CD8-positive, alpha-beta T cell (primary cell): ENCODE measurements at regions of chr1 and their contacts with region 1.

Region 1: GRCh38 chr1:116372587-116373444 is at the start of gene ATP1A1:
- DNase-seq: peak; percentile 93 to 99 (median 98)
- ATAC-seq: peak; percentile 66
- H3K4me3 ChIP-seq: peak within 1 kb of the TSS; percentile 73 to 80
- H3K4me3 Mint-ChIP-seq: peak within 1 kb of the TSS; percentile 96
- H3K27ac ChIP-seq: peak within 1 kb of the TSS; percentile 83 to 92
- H3K27ac Mint-ChIP-seq: peak within 1 kb of the TSS; percentile 97
- H3K4me1 ChIP-seq: peaks cover 35% of the 10 kb centered on the region
- H3K4me1 Mint-ChIP-seq: peaks cover 47% of the 10 kb centered on the region
- H3K27me3 ChIP-seq: no peaks in the 10 kb centered on the region
- H3K27me3 Mint-ChIP-seq: no peaks in the 10 kb centered on the region
- CTCF ChIP-seq: no peak
- total RNA-seq, gene ATP1A1: 204 to 211 TPM

Region 2: GRCh38 chr1:116168277-116169097 is 204.3 kb before region 1 on chr1:
- CTCF ChIA-PET with region 1: interaction called, 3 read pairs
- POLR2A ChIA-PET with region 1: no interaction called
- intact Hi-C with region 1: loop called (anchors 5 kb)
- DNase-seq: peak; percentile 74 to 91 (median 86)
- ATAC-seq: peak; percentile 98
- H3K4me3 ChIP-seq: peak overlapping the region; percentile 61 to 88
- H3K4me3 Mint-ChIP-seq: peak overlapping the region; percentile 77
- H3K27ac ChIP-seq: peak overlapping the region; percentile 48 to 68
- H3K27ac Mint-ChIP-seq: peak overlapping the region; percentile 86
- H3K4me1 ChIP-seq: peaks cover 13% of the 10 kb centered on the region
- H3K4me1 Mint-ChIP-seq: peaks cover 12% of the 10 kb centered on the region
- H3K27me3 ChIP-seq: no peaks in the 10 kb centered on the region
- H3K27me3 Mint-ChIP-seq: no peaks in the 10 kb centered on the region
- CTCF ChIP-seq: peak; percentile 94

Region 3: GRCh38 chr1:116202934-116203723 is 169.7 kb before region 1 on chr1:
- CTCF ChIA-PET with region 1: no interaction called
- POLR2A ChIA-PET with region 1: no interaction called
- intact Hi-C with region 1: no loop called
- DNase-seq: no peak
- ATAC-seq: no peak
- H3K4me3 ChIP-seq: no peak overlapping the region
- H3K4me3 Mint-ChIP-seq: no peak overlapping the region
- H3K27ac ChIP-seq: no peak overlapping the region
- H3K27ac Mint-ChIP-seq: no peak overlapping the region
- H3K4me1 ChIP-seq: no peaks in the 10 kb centered on the region
- H3K4me1 Mint-ChIP-seq: no peaks in the 10 kb centered on the region
- H3K27me3 ChIP-seq: no peaks in the 10 kb centered on the region
- H3K27me3 Mint-ChIP-seq: peaks cover 11% of the 10 kb centered on the region
- CTCF ChIP-seq: no peak

Region 4: GRCh38 chr1:116351914-116352313 is 20.9 kb before region 1 on chr1:
- CTCF ChIA-PET with region 1: no interaction called
- POLR2A ChIA-PET with region 1: no interaction called
- intact Hi-C with region 1: no loop called
- DNase-seq: no peak
- ATAC-seq: no peak
- H3K4me3 ChIP-seq: no peak overlapping the region
- H3K4me3 Mint-ChIP-seq: no peak overlapping the region
- H3K27ac ChIP-seq: no peak overlapping the region
- H3K27ac Mint-ChIP-seq: no peak overlapping the region
- H3K4me1 ChIP-seq: peaks cover 23% of the 10 kb centered on the region
- H3K4me1 Mint-ChIP-seq: peaks cover 41% of the 10 kb centered on the region
- H3K27me3 ChIP-seq: peaks cover 0 to 3% of the 10 kb centered on the region in 2 experiments
- H3K27me3 Mint-ChIP-seq: no peaks in the 10 kb centered on the region
- CTCF ChIP-seq: no peak

Region 5: DNA sequence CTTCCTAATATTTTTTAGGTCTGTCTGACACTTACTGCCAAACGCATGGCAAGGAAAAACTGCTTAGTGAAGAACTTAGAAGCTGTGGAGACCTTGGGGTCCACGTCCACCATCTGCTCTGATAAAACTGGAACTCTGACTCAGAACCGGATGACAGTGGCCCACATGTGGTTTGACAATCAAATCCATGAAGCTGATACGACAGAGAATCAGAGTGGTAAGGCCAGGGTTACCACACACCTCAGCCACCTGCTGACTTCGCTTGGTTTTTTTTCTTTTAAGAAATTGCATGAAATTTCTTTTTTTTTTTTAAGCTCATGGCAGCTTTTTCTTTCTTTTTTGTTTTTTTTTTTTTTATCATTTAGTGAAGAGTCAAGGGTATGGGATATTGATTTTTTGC is 17.4 kb after region 1 on chr1:
- CTCF ChIA-PET with region 1: interaction called, 4 read pairs
- POLR2A ChIA-PET with region 1: interaction called, 11 read pairs
- intact Hi-C with region 1: loop called in 1 of 2 experiments (anchors 1 kb)
- DNase-seq: peak in 6 of 9 experiments; percentile 14 to 83 (median 49)
- ATAC-seq: peak; percentile 87
- H3K4me3 ChIP-seq: no peak overlapping the region
- H3K4me3 Mint-ChIP-seq: no peak overlapping the region
- H3K27ac ChIP-seq: peak overlapping the region in 1 of 2 experiments; percentile 34
- H3K27ac Mint-ChIP-seq: peak overlapping the region; percentile 72
- H3K4me1 ChIP-seq: peaks cover 13% of the 10 kb centered on the region
- H3K4me1 Mint-ChIP-seq: peaks cover 61% of the 10 kb centered on the region
- H3K27me3 ChIP-seq: no peaks in the 10 kb centered on the region
- H3K27me3 Mint-ChIP-seq: no peaks in the 10 kb centered on the region
- CTCF ChIP-seq: no peak

Region 6: GRCh38 chr1:116529199-116529616 is 156.4 kb after region 1 on chr1:
- CTCF ChIA-PET with region 1: no interaction called
- POLR2A ChIA-PET with region 1: no interaction called
- intact Hi-C with region 1: no loop called
- DNase-seq: no peak
- ATAC-seq: no peak
- H3K4me3 ChIP-seq: no peak overlapping the region
- H3K4me3 Mint-ChIP-seq: no peak overlapping the region
- H3K27ac ChIP-seq: no peak overlapping the region
- H3K27ac Mint-ChIP-seq: no peak overlapping the region
- H3K4me1 ChIP-seq: no peaks in the 10 kb centered on the region
- H3K4me1 Mint-ChIP-seq: no peaks in the 10 kb centered on the region
- H3K27me3 ChIP-seq: no peaks in the 10 kb centered on the region
- H3K27me3 Mint-ChIP-seq: no peaks in the 10 kb centered on the region
- CTCF ChIP-seq: no peak

Region 7: DNA sequence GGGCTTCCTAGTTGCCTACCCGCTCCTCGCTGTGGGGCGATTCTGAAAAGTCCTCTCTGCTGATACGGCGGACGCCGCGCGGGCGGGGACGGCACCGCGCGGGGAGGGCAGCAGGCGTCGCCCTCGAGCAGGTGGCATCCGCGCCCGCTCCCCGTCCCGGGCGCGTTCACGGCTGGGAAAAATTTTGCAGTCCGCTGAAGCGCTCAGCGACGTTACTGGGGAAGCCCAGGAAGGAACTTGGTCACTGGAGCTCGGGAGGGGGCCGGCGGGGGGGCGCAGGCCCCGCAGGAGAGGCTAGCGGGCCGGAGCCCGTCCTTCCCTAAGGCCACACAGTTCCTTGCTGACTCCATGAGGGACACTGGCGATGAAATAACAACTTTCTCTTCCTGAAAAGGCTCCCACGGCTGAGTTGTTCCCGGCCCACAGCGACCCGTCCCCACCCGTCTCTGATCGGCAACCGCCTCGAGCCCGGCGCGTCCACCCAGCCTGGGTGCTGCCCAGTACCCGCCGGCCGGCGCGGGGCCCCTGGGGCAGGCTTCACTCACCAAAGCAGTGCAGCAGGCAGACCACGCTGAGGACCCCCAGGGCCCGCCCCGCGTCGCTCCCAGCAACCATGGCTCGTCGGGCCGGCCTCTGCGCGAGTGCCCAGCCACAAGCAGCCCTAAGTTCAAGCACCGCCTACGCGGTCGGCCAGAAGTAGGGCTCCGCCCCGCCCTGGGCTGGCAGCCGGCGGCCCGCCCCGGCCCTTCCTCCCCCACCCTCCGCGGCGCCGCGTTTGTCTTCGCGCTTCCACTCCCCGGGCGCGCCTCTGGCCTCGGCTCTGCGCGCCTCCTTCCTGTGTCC is 197.8 kb after region 1 on chr1 and contains the start of gene CD58:
- CTCF ChIA-PET with region 1: no interaction called
- POLR2A ChIA-PET with region 1: no interaction called
- intact Hi-C with region 1: loop called (anchors 2 to 5 kb)
- DNase-seq: peak; percentile 53 to 89 (median 76)
- ATAC-seq: peak; percentile 75
- H3K4me3 ChIP-seq: peak within 1 kb of the TSS; percentile 88 to 95
- H3K4me3 Mint-ChIP-seq: peak within 1 kb of the TSS; percentile 92
- H3K27ac ChIP-seq: peak within 1 kb of the TSS; percentile 62 to 89
- H3K27ac Mint-ChIP-seq: peak within 1 kb of the TSS; percentile 92
- H3K4me1 ChIP-seq: peaks cover 3% of the 10 kb centered on the region
- H3K4me1 Mint-ChIP-seq: peaks cover 38% of the 10 kb centered on the region
- H3K27me3 ChIP-seq: no peaks in the 10 kb centered on the region
- H3K27me3 Mint-ChIP-seq: no peaks in the 10 kb centered on the region
- CTCF ChIP-seq: peak; percentile 73
- total RNA-seq, gene CD58: 5.4 to 6.6 TPM

Region 8: DNA sequence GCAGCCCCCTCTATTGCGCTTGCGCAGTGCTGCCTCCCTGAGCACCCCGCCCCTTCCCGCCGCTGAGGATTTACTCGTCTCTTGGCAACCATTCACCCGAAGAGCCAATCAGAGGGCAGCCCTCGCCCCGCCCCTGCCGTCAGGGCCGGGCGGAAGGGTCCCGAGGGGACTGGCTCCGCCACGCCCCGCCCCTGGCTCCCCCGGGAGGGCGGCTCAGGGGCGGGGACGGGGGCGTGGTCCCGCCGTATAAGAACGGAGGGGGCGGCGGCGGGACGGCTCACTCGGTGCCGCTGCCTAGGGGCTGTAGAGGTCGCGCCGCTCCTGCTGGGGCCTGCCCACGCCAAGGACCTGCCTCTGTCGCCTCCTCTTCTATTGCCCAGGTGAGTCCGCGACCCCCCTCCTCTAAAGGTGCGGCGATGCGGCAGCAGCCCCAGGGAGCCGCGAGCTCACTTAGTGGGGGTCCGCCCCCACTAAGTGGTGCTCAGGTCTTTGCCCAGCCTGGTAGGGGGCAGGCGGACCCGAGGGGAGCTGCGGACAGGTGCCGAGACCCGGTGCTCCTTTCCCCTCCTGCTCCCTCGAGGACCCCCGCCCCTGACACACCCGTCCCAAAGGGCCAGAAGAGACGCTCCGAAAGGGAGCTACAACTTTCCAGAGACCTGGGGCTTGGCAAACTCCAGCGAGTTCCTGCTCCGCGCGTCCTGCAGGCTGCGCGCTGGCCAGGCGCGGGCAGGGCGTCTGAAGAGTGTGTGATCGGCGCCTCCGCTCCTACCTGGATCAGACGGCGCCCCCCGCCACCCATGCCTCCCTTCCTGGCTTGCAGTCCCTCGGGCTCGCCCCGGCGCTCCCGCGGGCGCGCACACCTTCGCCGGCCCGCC is 1233.2 kb after region 1 on chr1 and contains the start of gene TENT5C:
- CTCF ChIA-PET with region 1: no interaction called
- POLR2A ChIA-PET with region 1: no interaction called
- intact Hi-C with region 1: loop called in 1 of 2 experiments (anchors 10 kb)
- DNase-seq: peak; percentile 96 to 99 (median 99)
- ATAC-seq: peak; percentile 91
- H3K4me3 ChIP-seq: peak within 1 kb of the TSS; percentile 91 to 93
- H3K4me3 Mint-ChIP-seq: peak within 1 kb of the TSS; percentile 100
- H3K27ac ChIP-seq: peak within 1 kb of the TSS; percentile 95
- H3K27ac Mint-ChIP-seq: peak within 1 kb of the TSS; percentile 97
- H3K4me1 ChIP-seq: peaks cover 16% of the 10 kb centered on the region
- H3K4me1 Mint-ChIP-seq: peaks cover 36% of the 10 kb centered on the region
- H3K27me3 ChIP-seq: no peaks in the 10 kb centered on the region
- H3K27me3 Mint-ChIP-seq: no peaks in the 10 kb centered on the region
- CTCF ChIP-seq: no peak
- total RNA-seq, gene TENT5C: 146 to 150 TPM